ENCODE measurements at regions of chr3 and their contacts with region 1.

Region 1: GRCh38 chr3:28667646-28668621 is 319.3 kb upstream of the AZI2 start:
- DNase-seq: peak; percentile 72
- ATAC-seq: peak; percentile 90
- H3K4me3 Mint-ChIP-seq: no peak overlapping the region
- H3K27ac Mint-ChIP-seq: no peak overlapping the region
- H3K4me1 Mint-ChIP-seq: no peaks in the 10 kb centered on the region
- H3K27me3 Mint-ChIP-seq: peaks cover 4% of the 10 kb centered on the region
- CTCF ChIP-seq: peak; percentile 78

Region 2: DNA sequence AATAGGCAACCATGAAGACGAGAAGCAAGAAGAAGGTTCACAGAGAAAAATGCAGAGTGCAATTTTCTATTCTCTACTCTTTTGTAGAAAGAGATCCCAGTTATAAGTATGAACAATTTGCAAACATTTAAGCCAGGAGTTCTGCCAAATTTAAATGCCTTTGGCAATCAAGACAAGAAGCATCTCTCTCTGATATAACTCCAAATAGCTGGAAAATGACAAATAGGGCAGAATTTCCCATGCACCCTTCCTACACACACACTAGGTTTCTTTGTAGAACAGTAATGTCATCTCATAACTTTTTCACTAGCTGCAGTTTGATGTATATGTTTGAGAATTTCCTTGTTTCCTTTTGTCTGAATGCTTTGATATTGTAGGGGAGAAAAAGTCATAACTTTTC is 14.2 kb after region 1 on chr3:
- CTCF ChIA-PET with region 1: interaction called, 13 read pairs
- POLR2A ChIA-PET with region 1: no interaction called
- intact Hi-C with region 1: no loop called
- DNase-seq: no peak
- ATAC-seq: no peak
- H3K4me3 Mint-ChIP-seq: no peak overlapping the region
- H3K27ac Mint-ChIP-seq: no peak overlapping the region
- H3K4me1 Mint-ChIP-seq: no peaks in the 10 kb centered on the region
- H3K27me3 Mint-ChIP-seq: peaks cover 6% of the 10 kb centered on the region
- CTCF ChIP-seq: no peak

Region 3: DNA sequence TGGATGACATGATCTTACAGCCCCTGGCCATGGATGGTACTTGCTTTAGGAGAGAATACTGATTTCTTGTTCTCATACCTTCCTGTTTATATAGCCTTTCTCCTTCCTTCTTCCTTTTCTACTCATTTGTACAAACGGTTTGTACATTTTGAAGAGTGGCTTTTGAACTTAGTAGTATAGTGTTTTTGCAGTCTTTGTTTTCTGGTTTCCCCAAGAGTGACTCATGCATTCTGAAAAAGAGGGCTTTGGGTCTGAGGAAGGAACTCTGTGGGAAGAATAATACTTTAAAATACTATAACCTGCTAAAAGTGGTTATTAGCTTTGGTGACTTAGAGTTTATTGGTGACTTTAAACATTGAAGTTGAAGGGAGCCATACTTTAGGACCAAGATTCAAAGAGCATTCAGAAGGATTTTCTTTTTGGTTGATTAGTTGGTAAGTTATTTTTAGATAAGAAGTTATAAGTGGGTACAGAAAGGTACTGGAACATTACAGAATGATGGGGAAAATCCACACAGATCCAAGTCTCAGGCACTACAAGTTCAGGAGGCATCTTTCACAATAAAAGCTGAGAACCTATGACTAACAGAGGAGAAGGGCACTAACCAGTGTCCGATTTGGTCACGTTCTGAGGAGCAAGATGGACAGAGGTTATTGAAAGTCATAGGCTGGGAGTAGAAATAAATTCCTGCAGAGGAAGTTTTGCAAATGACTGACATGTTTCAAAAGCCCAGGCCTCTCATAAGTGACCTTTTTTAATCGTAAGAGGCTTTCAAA is 50.3 kb after region 1 on chr3:
- CTCF ChIA-PET with region 1: no interaction called
- POLR2A ChIA-PET with region 1: no interaction called
- intact Hi-C with region 1: no loop called
- DNase-seq: no peak
- ATAC-seq: no peak
- H3K4me3 Mint-ChIP-seq: no peak overlapping the region
- H3K27ac Mint-ChIP-seq: no peak overlapping the region
- H3K4me1 Mint-ChIP-seq: no peaks in the 10 kb centered on the region
- H3K27me3 Mint-ChIP-seq: no peaks in the 10 kb centered on the region
- CTCF ChIP-seq: no peak

Measured in activated CD8-positive, alpha-beta T cell treated with anti-CD3 and anti-CD28 coated beads for 36 hours (primary cell).